Mammary epithelial cell (primary cell): ENCODE measurements at regions of chr10 and their contacts with region 1.

Region 1: GRCh38 chr10:122044045-122044661 is 55.2 kb downstream of the TACC2 start:
- DNase-seq: no peak
- H3K4me3 ChIP-seq: no peak overlapping the region
- H3K27ac ChIP-seq: no peak overlapping the region
- H3K4me1 ChIP-seq: no peaks in the 10 kb centered on the region
- H3K27me3 ChIP-seq: no peaks in the 10 kb centered on the region
- CTCF ChIP-seq: no peak

Region 2: GRCh38 chr10:121921238-121921931 is 122.8 kb before region 1 on chr10:
- CTCF ChIA-PET with region 1: no interaction called
- dilution Hi-C with region 1: loop called (anchors 5 kb)
- in situ Hi-C with region 1: no loop called
- intact Hi-C with region 1: no loop called
- DNase-seq: no peak
- H3K4me3 ChIP-seq: no peak overlapping the region
- H3K27ac ChIP-seq: no peak overlapping the region
- H3K4me1 ChIP-seq: peaks cover 3% of the 10 kb centered on the region
- H3K27me3 ChIP-seq: no peaks in the 10 kb centered on the region
- CTCF ChIP-seq: no peak

Region 3: GRCh38 chr10:121974535-121975294 is 69.4 kb before region 1 on chr10 and contains the start of gene NSMCE4A:
- CTCF ChIA-PET with region 1: no interaction called
- dilution Hi-C with region 1: loop called (anchors 5 kb)
- in situ Hi-C with region 1: no loop called
- intact Hi-C with region 1: no loop called
- DNase-seq: peak; percentile 66
- H3K4me3 ChIP-seq: peak within 1 kb of the TSS; percentile 61 to 72 (median 62)
- H3K27ac ChIP-seq: peak within 1 kb of the TSS; percentile 65
- H3K4me1 ChIP-seq: peaks cover 10% of the 10 kb centered on the region
- H3K27me3 ChIP-seq: no peaks in the 10 kb centered on the region
- CTCF ChIP-seq: peak; percentile 47 to 64
- total RNA-seq, gene NSMCE4A: 14.5 to 28.6 TPM

Region 4: GRCh38 chr10:121994390-121994961 is 49.7 kb before region 1 on chr10:
- CTCF ChIA-PET with region 1: no interaction called
- dilution Hi-C with region 1: loop called (anchors 5 kb)
- in situ Hi-C with region 1: no loop called
- intact Hi-C with region 1: no loop called
- DNase-seq: peak; percentile 56
- H3K4me3 ChIP-seq: no peak overlapping the region
- H3K27ac ChIP-seq: peak overlapping the region; percentile 34
- H3K4me1 ChIP-seq: peaks cover 28% of the 10 kb centered on the region
- H3K27me3 ChIP-seq: no peaks in the 10 kb centered on the region
- CTCF ChIP-seq: no peak

Region 5: DNA sequence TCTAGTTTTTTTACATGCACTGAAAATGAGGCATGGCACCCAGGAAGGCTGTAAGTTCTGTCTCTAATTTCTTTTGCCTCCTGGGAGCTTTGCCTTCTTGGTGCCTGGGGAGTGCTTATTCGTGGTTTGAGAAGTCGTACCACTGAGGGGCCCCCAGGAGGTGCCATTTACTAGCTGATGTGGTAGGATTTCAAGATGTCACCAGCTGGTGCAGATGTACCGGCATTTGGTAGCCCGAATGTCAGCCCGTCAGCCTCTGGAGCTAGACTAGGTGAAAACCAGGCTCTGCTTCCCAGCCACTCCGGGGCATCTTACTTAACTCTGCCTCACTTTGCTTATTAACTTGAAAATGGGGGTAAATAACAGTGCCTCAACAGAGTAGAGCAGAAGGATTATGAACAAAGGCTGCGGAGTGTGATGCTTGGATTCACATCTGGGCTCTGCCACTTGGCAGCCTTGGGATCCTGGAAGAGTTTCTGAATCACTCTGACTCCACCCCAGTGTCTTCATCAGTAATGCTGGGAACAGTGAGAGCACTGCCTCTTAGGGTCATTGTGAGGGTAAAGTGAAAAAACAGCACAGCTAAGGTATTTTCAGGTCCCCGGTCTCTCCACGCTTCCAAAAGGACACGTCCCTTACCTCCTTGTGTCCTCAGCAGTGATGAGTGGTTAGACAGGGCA is 195.6 kb after region 1 on chr10:
- CTCF ChIA-PET with region 1: no interaction called
- dilution Hi-C with region 1: no loop called
- in situ Hi-C with region 1: no loop called
- intact Hi-C with region 1: no loop called
- DNase-seq: no peak
- H3K4me3 ChIP-seq: no peak overlapping the region
- H3K27ac ChIP-seq: no peak overlapping the region
- H3K4me1 ChIP-seq: no peaks in the 10 kb centered on the region
- H3K27me3 ChIP-seq: no peaks in the 10 kb centered on the region
- CTCF ChIP-seq: no peak